ENCODE measurements at regions of chr20 and their contacts with region 1.

Region 1: DNA sequence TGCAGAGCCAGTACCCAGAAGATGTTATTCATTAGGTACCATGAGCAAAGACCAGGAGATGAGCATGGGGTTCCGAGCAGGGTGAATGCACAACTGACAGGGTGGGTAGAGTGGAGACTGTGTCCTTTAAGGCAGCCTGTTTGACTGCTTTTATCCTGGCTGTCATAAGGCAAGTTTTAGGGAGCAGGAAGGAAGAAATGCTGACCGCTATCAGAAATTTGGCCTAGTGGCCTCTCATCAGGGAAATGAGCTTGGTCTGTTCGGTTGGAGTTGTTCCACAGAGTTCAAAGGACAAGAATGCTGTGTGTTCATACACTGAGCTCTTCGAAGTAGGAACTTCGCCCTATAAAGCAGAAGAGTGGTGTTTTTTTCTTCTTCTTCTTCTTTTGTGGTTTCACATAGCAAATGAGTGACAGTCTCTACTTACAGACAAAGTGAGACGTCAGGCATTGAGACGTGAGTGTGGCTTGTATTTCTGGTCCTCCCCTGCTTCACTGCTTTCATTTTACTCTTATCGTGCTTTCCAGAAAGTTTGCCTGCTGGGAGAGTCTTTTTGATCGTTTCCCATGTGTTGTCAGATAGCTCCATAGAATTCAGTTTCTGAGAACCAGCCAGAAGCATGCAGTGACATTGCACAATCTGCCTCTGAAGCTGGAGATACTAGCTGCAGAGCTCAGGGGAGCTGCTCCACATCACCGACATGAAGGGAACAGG is at the start of gene CASS4:
- DNase-seq: peak; percentile 63
- ATAC-seq: peak; percentile 53
- H3K4me3 Mint-ChIP-seq: peak within 1 kb of the TSS; percentile 69
- H3K27ac Mint-ChIP-seq: peak within 1 kb of the TSS; percentile 94
- H3K4me1 Mint-ChIP-seq: peaks cover 47% of the 10 kb centered on the region
- H3K27me3 Mint-ChIP-seq: no peaks in the 10 kb centered on the region
- total RNA-seq, gene CASS4: 5.1 to 5.6 TPM

Region 2: GRCh38 chr20:56163816-56164215 is 248.1 kb before region 1 on chr20:
- CTCF ChIA-PET with region 1: no interaction called
- POLR2A ChIA-PET with region 1: no interaction called
- intact Hi-C with region 1: no loop called
- DNase-seq: no peak
- ATAC-seq: no peak
- H3K4me3 Mint-ChIP-seq: no peak overlapping the region
- H3K27ac Mint-ChIP-seq: no peak overlapping the region
- H3K4me1 Mint-ChIP-seq: no peaks in the 10 kb centered on the region
- H3K27me3 Mint-ChIP-seq: peaks cover 4% of the 10 kb centered on the region

Region 3: DNA sequence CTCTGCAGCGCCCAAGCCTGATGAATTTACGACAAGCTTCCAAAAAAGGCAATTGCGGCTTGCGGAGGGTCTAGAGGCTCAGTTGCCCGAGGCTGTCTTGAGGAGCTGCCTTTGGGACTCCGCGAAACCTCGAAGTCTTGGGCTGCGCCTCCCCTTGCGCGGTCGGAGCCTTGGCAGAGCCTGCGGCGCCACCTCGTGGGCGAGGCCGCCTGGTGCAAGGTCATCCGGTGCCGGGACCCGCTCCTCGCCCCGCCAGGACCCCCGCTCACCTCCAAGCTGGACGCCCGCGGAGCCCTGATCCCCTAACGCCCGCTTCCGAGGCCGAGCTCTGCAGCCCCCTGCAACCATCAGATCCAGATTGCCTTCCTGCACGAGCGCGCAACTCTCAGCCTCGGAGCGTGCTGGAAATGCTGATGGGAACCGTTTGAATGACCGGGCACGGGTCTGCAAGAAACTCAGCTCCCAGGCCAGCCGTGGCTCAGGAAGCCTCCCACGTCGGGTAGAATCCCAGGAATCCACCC is 68.0 kb before region 1 on chr20:
- CTCF ChIA-PET with region 1: no interaction called
- POLR2A ChIA-PET with region 1: no interaction called
- intact Hi-C with region 1: no loop called
- DNase-seq: peak; percentile 77
- ATAC-seq: peak; percentile 88
- H3K4me3 Mint-ChIP-seq: no peak overlapping the region
- H3K27ac Mint-ChIP-seq: no peak overlapping the region
- H3K4me1 Mint-ChIP-seq: peaks cover 2% of the 10 kb centered on the region
- H3K27me3 Mint-ChIP-seq: peaks cover 49% of the 10 kb centered on the region

Region 4: DNA sequence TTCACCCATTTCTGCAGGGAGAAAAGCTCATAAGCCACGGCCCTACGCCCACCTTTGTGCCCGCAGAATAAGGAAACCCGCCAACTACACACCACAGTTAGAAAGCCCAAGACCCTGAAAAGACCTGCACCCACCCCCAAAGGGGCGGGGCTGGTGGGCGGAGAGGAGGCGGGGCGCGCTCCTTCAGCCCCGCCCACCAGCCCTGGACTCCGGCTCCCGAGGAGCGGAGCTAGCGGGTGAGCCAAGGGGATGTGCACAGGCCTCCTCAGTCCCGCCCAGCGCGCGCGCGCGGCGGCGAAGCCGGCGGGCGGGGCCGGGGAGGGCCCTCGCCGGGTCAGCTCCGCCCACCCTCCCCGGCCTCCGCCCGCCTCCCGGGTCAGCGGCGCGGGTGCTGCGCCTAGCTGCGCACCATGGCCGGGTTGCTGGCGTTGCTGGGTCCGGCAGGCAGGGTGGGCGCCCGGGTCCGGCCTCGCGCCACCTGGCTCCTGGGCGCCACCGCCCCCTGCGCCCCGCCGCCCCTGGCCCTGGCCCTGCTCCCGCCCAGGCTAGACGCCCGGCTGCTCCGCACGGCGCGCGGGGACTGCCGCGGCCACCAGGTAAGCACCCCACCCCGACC is 53.2 kb before region 1 on chr20 and contains the start of gene FAM210B:
- CTCF ChIA-PET with region 1: no interaction called
- POLR2A ChIA-PET with region 1: no interaction called
- intact Hi-C with region 1: loop called in 1 of 2 experiments (anchors 2 kb)
- DNase-seq: peak; percentile 90
- ATAC-seq: peak; percentile 100
- H3K4me3 Mint-ChIP-seq: peak within 1 kb of the TSS; percentile 82
- H3K27ac Mint-ChIP-seq: peak within 1 kb of the TSS; percentile 58
- H3K4me1 Mint-ChIP-seq: peaks cover 17% of the 10 kb centered on the region
- H3K27me3 Mint-ChIP-seq: no peaks in the 10 kb centered on the region
- total RNA-seq, gene FAM210B: 4.5 to 4.8 TPM

Region 5: GRCh38 chr20:56422076-56422823 is 10.3 kb after region 1 on chr20:
- CTCF ChIA-PET with region 1: interaction called, 14 read pairs
- POLR2A ChIA-PET with region 1: interaction called, 3 read pairs
- intact Hi-C with region 1: no loop called
- DNase-seq: no peak
- ATAC-seq: no peak
- H3K4me3 Mint-ChIP-seq: peak overlapping the region; percentile 42
- H3K27ac Mint-ChIP-seq: peak overlapping the region; percentile 85
- H3K4me1 Mint-ChIP-seq: peaks cover 65% of the 10 kb centered on the region
- H3K27me3 Mint-ChIP-seq: no peaks in the 10 kb centered on the region

Region 6: GRCh38 chr20:56453352-56453751 is 41.4 kb after region 1 on chr20:
- CTCF ChIA-PET with region 1: no interaction called
- POLR2A ChIA-PET with region 1: no interaction called
- intact Hi-C with region 1: loop called in 1 of 2 experiments (anchors 5 kb)
- DNase-seq: no peak
- ATAC-seq: no peak
- H3K4me3 Mint-ChIP-seq: no peak overlapping the region
- H3K27ac Mint-ChIP-seq: no peak overlapping the region
- H3K4me1 Mint-ChIP-seq: peaks cover 24% of the 10 kb centered on the region
- H3K27me3 Mint-ChIP-seq: no peaks in the 10 kb centered on the region

Region 7: GRCh38 chr20:57351042-57351783 is 939.3 kb after region 1 on chr20 and contains the start of gene RAE1:
- CTCF ChIA-PET with region 1: no interaction called
- POLR2A ChIA-PET with region 1: no interaction called
- intact Hi-C with region 1: loop called in 1 of 2 experiments (anchors 10 kb)
- DNase-seq: peak; percentile 94
- ATAC-seq: peak; percentile 84
- H3K4me3 Mint-ChIP-seq: peak within 1 kb of the TSS; percentile 96
- H3K27ac Mint-ChIP-seq: peak within 1 kb of the TSS; percentile 89
- H3K4me1 Mint-ChIP-seq: peaks cover 37% of the 10 kb centered on the region
- H3K27me3 Mint-ChIP-seq: no peaks in the 10 kb centered on the region
- total RNA-seq, gene RAE1: 42.7 to 48.9 TPM

Region 8: GRCh38 chr20:57672159-57672558 is 1260.2 kb after region 1 on chr20:
- CTCF ChIA-PET with region 1: no interaction called
- POLR2A ChIA-PET with region 1: no interaction called
- intact Hi-C with region 1: no loop called
- DNase-seq: peak; percentile 28
- ATAC-seq: no peak
- H3K4me3 Mint-ChIP-seq: no peak overlapping the region
- H3K27ac Mint-ChIP-seq: no peak overlapping the region
- H3K4me1 Mint-ChIP-seq: peaks cover 8% of the 10 kb centered on the region
- H3K27me3 Mint-ChIP-seq: no peaks in the 10 kb centered on the region

Measured in activated CD4-positive, alpha-beta T cell treated with anti-CD3 and anti-CD28 coated beads for 36 hours (primary cell).